Caco-2 (cell line): ENCODE measurements at regions of chr9 and their contacts with region 1.

Region 1: DNA sequence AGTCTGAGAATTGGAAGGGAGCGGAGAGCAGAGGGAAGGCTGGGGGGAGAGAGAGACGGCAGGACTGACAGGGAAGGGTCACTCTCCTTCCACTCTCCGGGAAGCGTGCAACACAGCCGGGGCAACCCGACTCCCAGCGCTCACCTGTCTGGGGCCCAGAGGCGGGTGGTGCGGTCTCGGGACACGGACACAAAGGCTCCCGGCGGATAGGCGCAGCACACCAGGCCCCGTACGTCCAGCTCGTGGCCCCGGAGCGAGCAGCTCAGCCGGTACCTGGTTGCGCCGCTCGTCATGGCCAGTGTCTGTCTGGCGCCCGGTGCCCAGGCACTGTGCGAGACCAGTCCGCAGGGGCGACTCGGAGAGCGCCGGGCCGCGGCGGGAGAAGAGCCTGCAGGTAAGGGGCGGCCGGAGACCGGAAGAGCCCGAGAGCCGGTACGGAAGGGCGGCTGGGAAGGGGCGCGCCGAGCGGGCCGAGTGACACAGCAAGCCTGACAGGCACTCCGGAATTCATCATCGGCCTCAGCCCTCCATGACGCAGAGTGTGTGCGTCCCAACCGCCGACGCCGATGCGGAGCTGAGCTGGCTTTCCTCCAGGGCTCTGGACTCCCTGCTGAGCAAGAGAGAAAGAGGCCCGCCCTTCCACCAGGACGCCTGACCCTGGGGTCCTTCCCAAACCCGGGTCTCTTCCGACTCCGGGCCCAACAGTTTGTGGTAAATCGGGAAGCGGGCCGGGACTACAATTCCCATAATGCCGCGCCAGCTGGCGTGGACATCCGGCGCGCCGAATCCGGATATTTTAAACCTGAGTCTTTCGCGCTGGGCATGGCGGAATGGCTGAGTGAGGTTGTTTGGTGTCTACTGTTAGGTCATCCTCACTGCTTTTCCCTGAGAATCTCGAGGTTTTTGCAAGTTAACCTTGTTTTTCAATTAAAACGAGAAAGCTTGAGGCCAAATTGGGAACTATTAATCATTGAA is at the start of gene PLAA:
- DNase-seq: peak; percentile 71 to 75
- H3K4me3 ChIP-seq: peak within 1 kb of the TSS; percentile 69
- H3K4me3 Mint-ChIP-seq: peak within 1 kb of the TSS; percentile 95
- H3K27ac Mint-ChIP-seq: peak within 1 kb of the TSS; percentile 100
- H3K4me1 ChIP-seq: no peaks in the 10 kb centered on the region
- H3K4me1 Mint-ChIP-seq: peaks cover 7% of the 10 kb centered on the region
- H3K27me3 ChIP-seq: no peaks in the 10 kb centered on the region
- H3K27me3 Mint-ChIP-seq: no peaks in the 10 kb centered on the region
- CTCF ChIP-seq: no peak
- total RNA-seq, gene PLAA: 12.9 and 14.3 TPM in 2 replicates

Region 2: DNA sequence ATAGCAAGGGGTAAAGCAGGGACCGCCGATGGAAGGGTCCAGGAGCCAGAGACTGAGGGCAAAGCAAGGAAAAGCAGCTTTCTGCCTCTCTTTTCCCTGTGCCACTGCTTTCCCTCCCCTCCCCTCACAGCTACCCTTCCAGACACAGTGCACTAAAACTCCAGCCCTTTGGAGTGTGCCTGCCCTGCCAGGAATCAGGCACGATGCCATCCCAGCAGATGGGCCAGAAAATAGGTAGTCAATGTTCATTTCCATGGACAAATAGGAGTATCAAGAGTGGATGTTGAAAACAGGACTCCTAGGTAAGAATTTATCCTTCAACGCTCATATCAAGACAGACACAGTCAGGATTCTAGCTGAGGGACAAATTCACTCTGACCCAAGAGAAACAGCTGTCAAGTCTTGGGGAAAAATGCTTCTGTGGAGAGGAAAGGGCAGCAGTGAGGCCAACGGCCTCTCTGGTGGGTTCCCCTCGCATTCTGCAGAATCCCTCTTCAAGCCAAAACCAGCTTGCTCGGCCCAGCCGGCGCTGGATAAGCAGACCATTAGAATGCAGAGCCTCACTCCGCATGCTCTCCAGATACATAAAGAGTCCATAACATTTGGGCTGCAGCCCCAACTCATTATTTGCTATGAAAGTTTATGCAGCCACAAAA is 192.4 kb before region 1 on chr9:
- CTCF ChIA-PET with region 1: no interaction called
- POLR2A ChIA-PET with region 1: no interaction called
- intact Hi-C with region 1: no loop called
- DNase-seq: no peak
- H3K4me3 ChIP-seq: no peak overlapping the region
- H3K4me3 Mint-ChIP-seq: no peak overlapping the region
- H3K27ac Mint-ChIP-seq: no peak overlapping the region
- H3K4me1 ChIP-seq: no peaks in the 10 kb centered on the region
- H3K4me1 Mint-ChIP-seq: no peaks in the 10 kb centered on the region
- H3K27me3 ChIP-seq: no peaks in the 10 kb centered on the region
- H3K27me3 Mint-ChIP-seq: peaks cover 5% of the 10 kb centered on the region
- CTCF ChIP-seq: no peak

Region 3: DNA sequence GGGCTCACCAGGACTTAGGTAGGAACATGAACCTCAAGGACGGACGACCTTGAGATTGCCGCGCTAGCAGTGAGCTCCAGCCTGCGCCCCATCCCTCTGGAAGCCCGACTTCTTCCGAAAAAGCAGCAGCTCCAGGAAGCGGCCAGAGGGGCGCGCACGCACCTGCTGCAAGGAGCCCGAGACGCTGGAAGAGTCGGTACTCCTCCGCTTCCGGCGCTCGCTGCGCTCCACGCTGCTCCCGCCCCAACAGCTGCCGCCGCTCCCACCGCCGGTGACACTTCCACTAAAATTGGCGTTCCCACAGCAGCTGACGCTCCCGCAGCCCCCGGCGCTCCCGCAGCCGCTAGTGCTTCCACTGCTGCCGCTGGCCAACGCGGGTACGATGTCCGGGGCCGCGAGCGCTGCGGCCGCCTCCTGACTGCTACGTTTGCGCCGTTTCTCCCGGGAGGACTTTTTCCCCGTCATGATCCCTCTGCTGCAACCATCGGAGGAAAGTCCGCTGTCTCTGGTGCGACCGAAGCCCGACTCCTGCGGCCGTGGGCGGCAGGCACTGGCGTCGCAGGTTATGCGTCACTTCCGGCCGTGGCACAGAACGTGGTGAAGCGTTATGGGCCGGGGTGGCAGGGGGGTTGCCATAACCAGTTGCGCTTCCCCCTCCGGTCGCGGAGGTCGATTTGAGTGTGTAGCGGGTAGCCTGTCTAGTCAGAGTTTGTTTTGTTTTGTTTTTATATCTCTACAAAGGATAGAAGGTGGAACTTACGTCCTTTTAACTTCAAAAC is 54.6 kb before region 1 on chr9 and contains the start of gene CAAP1:
- CTCF ChIA-PET with region 1: no interaction called
- POLR2A ChIA-PET with region 1: no interaction called
- intact Hi-C with region 1: loop called (anchors 1 kb)
- DNase-seq: peak; percentile 77 to 80
- H3K4me3 ChIP-seq: peak within 1 kb of the TSS; percentile 66
- H3K4me3 Mint-ChIP-seq: peak within 1 kb of the TSS; percentile 84
- H3K27ac Mint-ChIP-seq: peak within 1 kb of the TSS; percentile 93
- H3K4me1 ChIP-seq: no peaks in the 10 kb centered on the region
- H3K4me1 Mint-ChIP-seq: no peaks in the 10 kb centered on the region
- H3K27me3 ChIP-seq: no peaks in the 10 kb centered on the region
- H3K27me3 Mint-ChIP-seq: no peaks in the 10 kb centered on the region
- CTCF ChIP-seq: peak in 1 of 2 experiments; percentile 22
- total RNA-seq, gene CAAP1: 7.0 and 9.2 TPM in 2 replicates